Naive thymus-derived CD4-positive, alpha-beta T cell (primary cell): ENCODE measurements at regions of chr14 and their contacts with region 1.

Region 1: DNA sequence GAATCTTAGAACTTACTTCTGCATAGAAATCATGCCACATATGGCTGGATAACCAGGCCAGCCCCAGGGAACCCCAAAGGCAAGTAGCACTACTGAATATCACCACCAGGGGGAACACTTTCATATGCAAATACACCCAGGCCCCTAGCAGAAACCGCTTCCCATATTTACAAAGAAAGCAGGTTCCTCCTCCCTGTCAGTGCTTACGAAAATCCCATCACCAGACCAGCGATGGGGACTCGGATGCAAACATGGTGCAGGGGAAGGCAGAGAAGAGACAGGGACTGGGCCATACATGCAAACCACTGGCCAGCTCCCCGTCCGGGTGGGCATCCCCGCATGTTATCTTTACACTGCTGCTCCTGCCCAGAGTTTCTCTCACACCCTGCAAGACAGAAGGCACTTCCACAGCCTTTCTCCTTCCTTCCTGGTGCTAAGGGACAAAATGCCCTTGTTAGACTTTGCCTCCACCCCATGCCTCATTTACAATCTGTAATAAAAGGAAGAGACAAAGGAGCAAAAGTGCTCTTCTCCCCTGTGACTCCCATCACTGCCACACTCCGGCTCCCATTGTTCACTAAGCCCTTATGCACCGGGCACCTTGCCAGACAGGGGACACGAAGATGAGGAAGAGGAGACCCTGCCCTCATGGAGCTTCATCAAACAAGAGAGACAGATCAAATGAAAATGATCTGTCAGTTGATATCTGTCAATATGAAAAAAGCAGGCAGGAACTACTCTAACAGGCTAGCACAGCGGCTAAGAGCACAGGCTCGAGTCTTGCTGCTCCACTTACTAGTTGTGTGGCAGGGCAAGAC is 62.3 kb downstream of the PTPN21 start:
- DNase-seq: peak in 8 of 9 donors; percentile 36 to 73 (median 58)
- ATAC-seq: peak; percentile 90
- H3K4me3 ChIP-seq: no peak overlapping the region
- H3K4me3 Mint-ChIP-seq: no peak overlapping the region
- H3K27ac ChIP-seq: no peak overlapping the region
- H3K27ac Mint-ChIP-seq: no peak overlapping the region
- H3K4me1 ChIP-seq: no peaks in the 10 kb centered on the region
- H3K4me1 Mint-ChIP-seq: peaks cover 0 to 7% (median 0%) of the 10 kb centered on the region in 7 donors
- H3K27me3 ChIP-seq: no peaks in the 10 kb centered on the region
- H3K27me3 Mint-ChIP-seq: peaks cover 0 to 6% (median 4%) of the 10 kb centered on the region in 5 donors

Region 2: GRCh38 chr14:88364710-88365413 is 127.6 kb before region 1 on chr14:
- CTCF ChIA-PET with region 1: no interaction called
- POLR2A ChIA-PET with region 1: no interaction called
- intact Hi-C with region 1: no loop called
- DNase-seq: no peak
- ATAC-seq: no peak
- H3K4me3 ChIP-seq: no peak overlapping the region
- H3K4me3 Mint-ChIP-seq: no peak overlapping the region
- H3K27ac ChIP-seq: no peak overlapping the region
- H3K27ac Mint-ChIP-seq: no peak overlapping the region
- H3K4me1 ChIP-seq: no peaks in the 10 kb centered on the region
- H3K4me1 Mint-ChIP-seq: no peaks in the 10 kb centered on the region
- H3K27me3 ChIP-seq: no peaks in the 10 kb centered on the region
- H3K27me3 Mint-ChIP-seq: peaks cover 7 to 26% (median 24%) of the 10 kb centered on the region in 5 donors

Region 3: DNA sequence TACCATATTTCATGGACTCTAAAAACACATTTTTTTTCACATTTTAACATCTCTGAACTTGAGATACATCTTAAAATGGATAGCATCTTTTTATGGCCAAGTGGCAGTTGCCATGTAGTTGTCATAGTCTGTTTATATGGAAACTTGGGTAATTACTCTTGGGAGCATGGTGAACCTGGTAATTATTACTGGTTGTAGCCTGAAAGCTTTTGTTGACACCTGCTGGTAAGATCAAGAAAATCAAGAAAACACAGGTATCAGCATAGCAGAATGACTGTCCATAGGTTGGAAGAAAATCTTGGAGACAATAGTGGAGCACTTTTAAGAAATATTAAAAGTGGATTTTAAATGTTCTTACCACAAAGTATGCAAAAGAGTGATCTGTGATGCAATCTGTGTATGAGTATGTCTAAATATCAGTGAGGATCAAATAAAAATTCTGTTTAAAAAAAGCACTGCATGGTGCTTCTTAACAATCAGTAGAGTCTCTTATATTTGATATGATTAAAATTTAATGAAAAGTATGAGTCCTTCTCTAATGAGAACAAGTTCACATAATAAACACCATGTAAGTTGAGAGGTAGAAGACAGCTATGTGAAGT is 376.2 kb after region 1 on chr14:
- CTCF ChIA-PET with region 1: interaction called, 8 read pairs
- POLR2A ChIA-PET with region 1: no interaction called
- intact Hi-C with region 1: loop called in 1 of 2 experiments (anchors 1 kb)
- DNase-seq: peak in 5 of 9 donors; percentile 3 to 27 (median 10)
- ATAC-seq: no peak
- H3K4me3 ChIP-seq: no peak overlapping the region
- H3K4me3 Mint-ChIP-seq: no peak overlapping the region
- H3K27ac ChIP-seq: no peak overlapping the region
- H3K27ac Mint-ChIP-seq: no peak overlapping the region
- H3K4me1 ChIP-seq: no peaks in the 10 kb centered on the region
- H3K4me1 Mint-ChIP-seq: no peaks in the 10 kb centered on the region
- H3K27me3 ChIP-seq: no peaks in the 10 kb centered on the region
- H3K27me3 Mint-ChIP-seq: no peaks in the 10 kb centered on the region

Region 4: DNA sequence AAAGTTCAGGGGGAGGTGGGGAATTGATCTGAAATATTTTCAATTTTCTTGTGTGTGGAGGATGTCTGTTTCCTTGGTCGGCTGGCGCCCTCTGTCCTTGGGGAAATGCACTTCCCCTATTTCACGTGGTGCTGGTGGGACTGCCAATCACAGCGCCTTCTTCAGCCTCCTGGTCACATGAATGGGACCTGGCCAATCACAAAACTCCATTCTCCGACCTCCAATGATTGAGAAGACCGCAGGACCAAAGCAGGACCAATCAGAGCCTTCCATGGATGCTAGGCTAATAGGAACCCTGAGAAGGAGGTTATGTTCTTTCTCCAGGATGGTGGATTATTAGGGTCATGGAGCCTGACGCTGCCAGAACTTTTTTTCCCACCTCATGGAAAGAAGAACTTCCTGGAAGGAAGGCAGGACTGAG is 520.6 kb after region 1 on chr14:
- CTCF ChIA-PET with region 1: no interaction called
- POLR2A ChIA-PET with region 1: no interaction called
- intact Hi-C with region 1: loop called (anchors 2 to 5 kb)
- DNase-seq: peak in 1 of 9 donors; percentile 12
- ATAC-seq: no peak
- H3K4me3 ChIP-seq: no peak overlapping the region
- H3K4me3 Mint-ChIP-seq: no peak overlapping the region
- H3K27ac ChIP-seq: no peak overlapping the region
- H3K27ac Mint-ChIP-seq: no peak overlapping the region
- H3K4me1 ChIP-seq: no peaks in the 10 kb centered on the region
- H3K4me1 Mint-ChIP-seq: peaks cover 0 to 4% (median 0%) of the 10 kb centered on the region in 7 donors
- H3K27me3 ChIP-seq: no peaks in the 10 kb centered on the region
- H3K27me3 Mint-ChIP-seq: peaks cover 14 to 24% (median 15%) of the 10 kb centered on the region in 5 donors